Activated CD8-positive, alpha-beta T cell treated with anti-CD3 and anti-CD28 coated beads for 36 hours (primary cell): ENCODE measurements at regions of chr6 and their contacts with region 1.

Region 1: DNA sequence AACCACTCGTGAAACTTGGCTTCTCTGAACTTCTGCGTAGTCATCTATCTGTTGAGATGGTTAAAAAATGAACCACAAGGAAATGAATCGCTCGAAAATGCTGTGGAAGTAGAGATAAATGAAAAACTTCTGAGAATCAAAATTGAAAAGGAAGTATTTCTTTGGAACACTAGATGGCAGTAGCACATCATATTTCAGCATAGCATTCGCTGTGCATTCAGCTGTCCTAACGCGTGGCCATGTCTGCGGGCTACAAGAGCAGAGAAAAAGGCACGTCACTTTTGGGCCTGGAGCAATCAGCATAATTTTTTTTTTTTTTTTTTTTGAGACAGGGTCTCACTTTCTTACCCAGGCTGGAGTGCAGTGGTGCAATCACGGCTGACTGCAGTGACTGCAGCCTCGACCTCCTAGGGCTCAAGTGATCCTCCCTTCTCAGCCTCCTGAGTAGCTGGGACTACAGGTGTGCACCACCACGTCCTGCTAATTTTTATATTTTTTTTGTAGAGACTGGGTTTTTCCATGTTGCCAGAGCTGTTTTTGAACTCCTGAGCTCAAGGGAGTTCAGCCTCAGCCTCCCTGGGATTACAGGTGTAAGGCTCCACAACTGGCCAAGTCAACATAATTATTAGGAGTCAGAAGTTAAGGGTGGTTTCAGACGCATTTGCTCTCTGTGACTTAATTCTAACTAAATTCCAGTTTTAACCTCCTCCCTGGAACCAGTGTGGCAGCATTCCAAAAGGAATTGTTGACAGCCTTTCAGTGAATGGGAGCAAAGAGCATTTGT is 8.8 kb upstream of the PERP start:
- DNase-seq: peak; percentile 62
- ATAC-seq: peak; percentile 87
- H3K4me3 Mint-ChIP-seq: no peak overlapping the region
- H3K27ac Mint-ChIP-seq: no peak overlapping the region
- H3K4me1 Mint-ChIP-seq: peaks cover 6% of the 10 kb centered on the region
- H3K27me3 Mint-ChIP-seq: peaks cover 24% of the 10 kb centered on the region
- CTCF ChIP-seq: peak; percentile 78

Region 2: GRCh38 chr6:137982418-137983189 is 133.5 kb before region 1 on chr6:
- CTCF ChIA-PET with region 1: no interaction called
- POLR2A ChIA-PET with region 1: no interaction called
- intact Hi-C with region 1: no loop called
- DNase-seq: no peak
- ATAC-seq: peak; percentile 55
- H3K4me3 Mint-ChIP-seq: no peak overlapping the region
- H3K27ac Mint-ChIP-seq: peak overlapping the region; percentile 52
- H3K4me1 Mint-ChIP-seq: peaks cover 15% of the 10 kb centered on the region
- H3K27me3 Mint-ChIP-seq: no peaks in the 10 kb centered on the region
- CTCF ChIP-seq: no peak

Region 3: DNA sequence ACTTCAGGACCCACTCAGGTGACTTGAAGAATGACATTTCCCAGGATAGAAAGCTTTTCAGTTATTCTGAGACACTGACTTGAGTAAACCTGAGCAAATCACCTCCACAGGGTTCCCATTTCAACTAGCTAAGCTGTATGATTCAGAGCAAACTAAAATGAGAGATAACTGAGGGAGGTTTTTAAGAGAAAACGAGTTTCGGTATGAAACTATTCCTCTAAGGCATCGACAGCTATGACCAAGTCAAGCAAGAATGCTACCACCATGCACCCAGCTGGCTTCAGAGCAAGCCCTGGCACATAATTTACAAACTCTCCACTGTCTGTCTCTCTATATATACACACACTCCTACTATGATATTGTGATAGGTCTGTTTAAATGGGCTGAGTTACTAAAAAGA is 84.2 kb before region 1 on chr6:
- CTCF ChIA-PET with region 1: no interaction called
- POLR2A ChIA-PET with region 1: no interaction called
- intact Hi-C with region 1: no loop called
- DNase-seq: no peak
- ATAC-seq: no peak
- H3K4me3 Mint-ChIP-seq: no peak overlapping the region
- H3K27ac Mint-ChIP-seq: no peak overlapping the region
- H3K4me1 Mint-ChIP-seq: no peaks in the 10 kb centered on the region
- H3K27me3 Mint-ChIP-seq: peaks cover 2% of the 10 kb centered on the region
- CTCF ChIP-seq: no peak

Region 4: GRCh38 chr6:138287144-138287955 is 171.3 kb after region 1 on chr6:
- CTCF ChIA-PET with region 1: interaction called, 63 read pairs
- POLR2A ChIA-PET with region 1: no interaction called
- intact Hi-C with region 1: loop called (anchors 5 kb)
- DNase-seq: peak; percentile 71
- ATAC-seq: peak; percentile 65
- H3K4me3 Mint-ChIP-seq: no peak overlapping the region
- H3K27ac Mint-ChIP-seq: no peak overlapping the region
- H3K4me1 Mint-ChIP-seq: peaks cover 5% of the 10 kb centered on the region
- H3K27me3 Mint-ChIP-seq: peaks cover 2% of the 10 kb centered on the region
- CTCF ChIP-seq: peak; percentile 69

Region 5: DNA sequence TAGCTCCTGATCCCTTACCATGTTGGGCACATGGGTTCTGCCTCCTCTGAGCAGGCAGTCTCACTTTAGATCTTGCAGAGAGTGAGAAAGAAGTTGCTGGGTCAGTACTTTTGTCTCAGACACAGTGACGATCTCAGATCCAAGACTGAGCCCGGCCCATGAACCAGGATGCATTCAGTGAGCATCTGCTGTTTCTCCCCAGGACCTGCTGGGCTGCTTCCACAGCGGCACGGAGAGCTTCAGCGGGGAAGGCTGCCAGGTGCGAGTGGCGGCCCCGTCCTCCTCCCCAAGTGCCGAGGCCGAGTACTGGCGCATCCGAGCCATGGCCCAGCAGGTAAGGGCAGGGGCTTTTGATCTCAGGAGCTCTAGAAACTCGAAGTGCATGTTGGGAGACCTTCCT is 207.8 kb after region 1 on chr6:
- CTCF ChIA-PET with region 1: no interaction called
- POLR2A ChIA-PET with region 1: no interaction called
- intact Hi-C with region 1: no loop called
- DNase-seq: no peak
- ATAC-seq: no peak
- H3K4me3 Mint-ChIP-seq: no peak overlapping the region
- H3K27ac Mint-ChIP-seq: no peak overlapping the region
- H3K4me1 Mint-ChIP-seq: no peaks in the 10 kb centered on the region
- H3K27me3 Mint-ChIP-seq: peaks cover 16% of the 10 kb centered on the region
- CTCF ChIP-seq: no peak

Region 6: DNA sequence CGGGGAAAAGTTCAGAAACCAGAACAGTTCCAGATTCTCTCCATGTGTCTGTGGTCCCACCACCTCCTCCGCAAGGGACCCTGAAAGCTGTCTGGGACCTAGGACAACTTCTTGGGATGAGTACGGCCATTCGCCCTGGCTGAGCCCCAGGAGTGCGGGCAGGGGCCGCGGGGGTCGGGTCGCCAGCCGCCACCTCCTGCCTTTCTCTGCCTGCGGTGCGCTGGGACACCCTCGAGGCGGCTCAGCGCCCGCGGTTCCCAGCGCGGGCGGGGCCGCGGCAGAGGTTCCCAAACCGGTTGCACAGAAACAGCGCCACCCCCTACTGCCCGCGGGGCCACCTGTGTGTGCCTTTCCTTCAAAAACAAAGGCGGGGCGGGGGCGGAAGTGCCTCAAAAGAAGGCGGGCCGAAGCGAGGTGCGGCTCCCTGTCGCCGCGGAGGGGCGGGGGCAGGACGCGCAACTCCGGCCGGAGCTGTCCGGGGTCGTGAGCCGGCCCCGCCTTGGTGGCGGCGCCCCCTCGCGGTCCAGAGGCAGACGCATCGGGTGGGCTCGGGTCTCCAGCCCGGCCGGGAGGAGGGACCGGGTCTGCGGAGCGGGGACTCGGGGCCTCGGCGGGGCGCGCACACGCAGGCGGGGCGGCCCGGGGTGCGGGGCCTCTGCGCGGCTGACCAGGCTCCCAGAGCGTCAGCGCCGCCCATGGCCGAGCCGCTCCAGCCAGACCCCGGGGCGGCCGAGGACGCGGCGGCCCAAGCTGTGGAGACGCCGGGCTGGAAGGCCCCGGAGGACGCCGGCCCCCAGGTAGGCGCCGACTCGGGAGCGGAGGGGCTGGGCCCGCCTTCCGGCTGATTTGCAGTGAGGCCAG is 288.0 kb after region 1 on chr6 and contains the start of gene HEBP2:
- CTCF ChIA-PET with region 1: interaction called, 23 read pairs
- POLR2A ChIA-PET with region 1: no interaction called
- intact Hi-C with region 1: loop called (anchors 10 kb)
- DNase-seq: peak; percentile 98
- ATAC-seq: peak; percentile 91
- H3K4me3 Mint-ChIP-seq: peak within 1 kb of the TSS; percentile 80
- H3K27ac Mint-ChIP-seq: peak within 1 kb of the TSS; percentile 83
- H3K4me1 Mint-ChIP-seq: peaks cover 23% of the 10 kb centered on the region
- H3K27me3 Mint-ChIP-seq: no peaks in the 10 kb centered on the region
- CTCF ChIP-seq: peak; percentile 43
- total RNA-seq, gene HEBP2: 28.2 to 28.7 TPM

Region 7: DNA sequence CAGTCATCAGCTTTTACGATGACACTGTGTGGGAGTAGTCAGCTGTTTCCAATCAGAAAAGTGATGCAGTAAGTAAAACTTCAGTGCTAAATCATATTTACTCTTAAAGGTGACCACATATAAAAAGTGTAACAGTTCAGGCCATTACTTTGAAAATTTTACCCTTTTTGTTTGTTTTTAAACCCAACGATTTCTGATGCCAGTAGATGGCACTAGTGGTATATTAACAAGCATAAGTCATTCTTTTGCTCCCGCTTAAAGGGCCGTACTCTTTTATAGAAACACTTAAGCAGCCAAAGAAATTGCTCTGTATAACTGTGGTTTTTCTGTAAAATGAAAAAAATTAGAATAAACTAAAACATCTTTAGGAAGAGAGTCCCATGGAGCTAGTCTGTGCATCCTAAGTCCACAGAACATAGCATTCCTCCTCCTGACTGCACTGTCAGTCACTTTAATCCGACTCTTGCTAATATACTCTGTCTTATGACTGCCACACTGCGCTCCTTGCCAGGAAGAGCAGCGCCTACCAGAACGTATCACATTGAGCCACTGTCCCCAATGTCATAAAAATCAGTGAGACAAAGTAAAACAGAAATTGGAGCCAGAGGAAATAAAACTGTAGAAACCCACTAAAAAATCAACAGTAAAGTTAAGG is 313.0 kb after region 1 on chr6:
- CTCF ChIA-PET with region 1: interaction called, 29 read pairs
- POLR2A ChIA-PET with region 1: no interaction called
- intact Hi-C with region 1: no loop called
- DNase-seq: no peak
- ATAC-seq: no peak
- H3K4me3 Mint-ChIP-seq: no peak overlapping the region
- H3K27ac Mint-ChIP-seq: no peak overlapping the region
- H3K4me1 Mint-ChIP-seq: no peaks in the 10 kb centered on the region
- H3K27me3 Mint-ChIP-seq: peaks cover 3% of the 10 kb centered on the region
- CTCF ChIP-seq: peak; percentile 72

Region 8: DNA sequence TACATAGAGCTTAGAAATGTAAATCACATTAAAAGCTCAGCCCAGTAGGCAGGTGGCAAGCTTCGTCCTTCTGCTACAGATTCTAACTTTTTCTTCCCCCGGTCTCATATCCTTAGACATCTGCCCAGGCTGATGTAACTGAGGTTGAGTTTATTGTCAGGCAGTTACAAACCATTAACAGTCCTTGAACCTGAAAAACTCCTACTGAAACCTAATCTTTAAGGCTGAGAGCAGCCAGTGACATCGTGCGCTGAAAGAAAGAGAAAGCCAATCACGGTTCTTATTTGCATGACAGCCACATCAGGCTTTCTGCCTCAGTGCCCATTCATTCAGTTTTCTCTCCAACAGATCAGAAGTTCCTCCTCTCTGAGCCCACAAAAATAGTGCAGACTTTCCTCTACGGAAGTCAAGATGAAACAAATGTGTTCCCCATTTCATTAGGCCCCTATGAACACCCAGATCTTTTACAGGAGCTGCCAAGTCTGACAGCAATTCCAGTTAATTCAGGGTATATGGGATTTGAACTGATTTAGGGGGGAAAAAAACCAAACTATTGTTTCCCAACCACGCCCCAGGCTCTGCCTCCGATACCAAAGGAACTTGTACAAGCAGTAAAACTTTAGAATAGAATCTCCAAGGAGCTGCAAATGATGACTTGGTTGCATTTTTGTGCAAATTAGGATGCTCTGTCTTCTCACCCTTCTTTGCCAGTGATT is 383.4 kb after region 1 on chr6 and contains the start of gene NHSL1:
- CTCF ChIA-PET with region 1: interaction called, 11 read pairs
- POLR2A ChIA-PET with region 1: no interaction called
- intact Hi-C with region 1: no loop called
- DNase-seq: no peak
- ATAC-seq: peak; percentile 27
- H3K4me3 Mint-ChIP-seq: no peak within 1 kb of the TSS
- H3K27ac Mint-ChIP-seq: no peak within 1 kb of the TSS
- H3K4me1 Mint-ChIP-seq: peaks cover 4% of the 10 kb centered on the region
- H3K27me3 Mint-ChIP-seq: peaks cover 7% of the 10 kb centered on the region
- CTCF ChIP-seq: no peak
- total RNA-seq, gene NHSL1: 0.18 to 0.49 TPM

Region 9: GRCh38 chr6:138509371-138509770 is 393.3 kb after region 1 on chr6:
- CTCF ChIA-PET with region 1: interaction called, 38 read pairs
- POLR2A ChIA-PET with region 1: no interaction called
- intact Hi-C with region 1: no loop called
- DNase-seq: peak; percentile 75
- ATAC-seq: peak; percentile 55
- H3K4me3 Mint-ChIP-seq: no peak overlapping the region
- H3K27ac Mint-ChIP-seq: no peak overlapping the region
- H3K4me1 Mint-ChIP-seq: no peaks in the 10 kb centered on the region
- H3K27me3 Mint-ChIP-seq: peaks cover 3% of the 10 kb centered on the region
- CTCF ChIP-seq: peak; percentile 63

Region 10: DNA sequence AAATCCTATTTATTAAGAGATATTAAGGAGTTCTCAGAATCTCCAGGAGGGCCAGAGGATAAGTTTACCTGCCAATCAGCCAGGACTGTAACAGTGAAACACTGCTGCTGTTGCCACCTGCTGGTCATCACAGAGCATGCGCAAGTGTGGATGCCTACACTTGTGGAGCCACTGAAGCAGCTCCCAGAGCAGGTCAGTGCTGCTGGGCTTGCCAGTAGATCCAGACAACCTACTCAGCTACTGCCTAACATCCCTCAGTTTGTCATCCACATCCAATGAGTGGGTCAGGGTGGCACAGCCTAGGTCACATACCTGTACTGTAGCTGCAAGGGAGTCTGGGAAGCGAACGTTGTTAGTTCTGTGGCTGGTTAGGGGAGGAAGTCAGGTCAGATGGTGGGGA is 401.6 kb after region 1 on chr6:
- CTCF ChIA-PET with region 1: interaction called, 58 read pairs
- POLR2A ChIA-PET with region 1: no interaction called
- intact Hi-C with region 1: loop called (anchors 5 kb)
- DNase-seq: peak; percentile 68
- ATAC-seq: peak; percentile 96
- H3K4me3 Mint-ChIP-seq: no peak overlapping the region
- H3K27ac Mint-ChIP-seq: no peak overlapping the region
- H3K4me1 Mint-ChIP-seq: peaks cover 6% of the 10 kb centered on the region
- H3K27me3 Mint-ChIP-seq: peaks cover 7% of the 10 kb centered on the region
- CTCF ChIP-seq: peak; percentile 86